ENCODE measurements at regions of chr6 and their contacts with region 1.

Region 1: DNA sequence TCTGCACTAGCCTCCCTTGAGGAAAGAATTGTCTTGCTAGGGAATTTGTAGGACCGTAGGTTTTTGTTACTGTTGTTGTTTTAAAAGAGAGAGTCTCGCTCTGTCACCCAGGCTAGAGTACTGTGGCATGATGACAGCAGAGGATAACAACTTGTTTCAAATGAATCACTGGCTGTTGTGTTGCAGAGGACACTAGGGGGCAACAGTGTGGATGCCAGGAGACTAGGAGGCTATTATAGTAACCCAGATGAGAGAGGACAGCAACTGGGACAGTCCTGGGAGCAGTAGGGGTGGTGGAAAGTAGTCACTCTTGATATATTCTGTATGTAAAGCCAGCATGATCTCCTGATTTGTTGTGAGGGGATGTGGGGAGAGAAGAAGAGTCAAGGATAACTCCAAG is 41.8 kb upstream of the LAMA4 start:
- DNase-seq: peak; percentile 11
- H3K27ac ChIP-seq: no peak overlapping the region
- CTCF ChIP-seq: no peak

Region 2: DNA sequence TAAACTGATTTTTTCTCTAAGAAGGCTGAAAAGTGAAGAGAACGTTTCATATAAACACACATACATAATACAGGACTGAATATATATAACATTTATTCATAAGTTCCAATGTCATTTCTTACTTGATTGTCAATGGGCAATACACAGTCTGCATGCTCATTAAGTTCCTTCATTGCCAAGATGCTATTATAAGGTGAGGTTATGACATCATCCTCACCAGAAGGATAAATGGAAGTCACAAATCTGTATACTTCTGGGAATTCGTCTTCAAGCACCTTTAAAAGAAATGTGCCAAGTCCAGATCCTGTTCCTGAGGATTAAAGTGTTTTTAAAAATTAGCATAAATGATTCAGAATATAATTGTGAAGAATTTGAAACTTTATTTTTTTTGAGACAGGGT is 219.9 kb before region 1 on chr6:
- CTCF ChIA-PET with region 1: no interaction called
- POLR2A ChIA-PET with region 1: no interaction called
- DNase-seq: no peak
- H3K27ac ChIP-seq: no peak overlapping the region
- CTCF ChIP-seq: no peak

Region 3: DNA sequence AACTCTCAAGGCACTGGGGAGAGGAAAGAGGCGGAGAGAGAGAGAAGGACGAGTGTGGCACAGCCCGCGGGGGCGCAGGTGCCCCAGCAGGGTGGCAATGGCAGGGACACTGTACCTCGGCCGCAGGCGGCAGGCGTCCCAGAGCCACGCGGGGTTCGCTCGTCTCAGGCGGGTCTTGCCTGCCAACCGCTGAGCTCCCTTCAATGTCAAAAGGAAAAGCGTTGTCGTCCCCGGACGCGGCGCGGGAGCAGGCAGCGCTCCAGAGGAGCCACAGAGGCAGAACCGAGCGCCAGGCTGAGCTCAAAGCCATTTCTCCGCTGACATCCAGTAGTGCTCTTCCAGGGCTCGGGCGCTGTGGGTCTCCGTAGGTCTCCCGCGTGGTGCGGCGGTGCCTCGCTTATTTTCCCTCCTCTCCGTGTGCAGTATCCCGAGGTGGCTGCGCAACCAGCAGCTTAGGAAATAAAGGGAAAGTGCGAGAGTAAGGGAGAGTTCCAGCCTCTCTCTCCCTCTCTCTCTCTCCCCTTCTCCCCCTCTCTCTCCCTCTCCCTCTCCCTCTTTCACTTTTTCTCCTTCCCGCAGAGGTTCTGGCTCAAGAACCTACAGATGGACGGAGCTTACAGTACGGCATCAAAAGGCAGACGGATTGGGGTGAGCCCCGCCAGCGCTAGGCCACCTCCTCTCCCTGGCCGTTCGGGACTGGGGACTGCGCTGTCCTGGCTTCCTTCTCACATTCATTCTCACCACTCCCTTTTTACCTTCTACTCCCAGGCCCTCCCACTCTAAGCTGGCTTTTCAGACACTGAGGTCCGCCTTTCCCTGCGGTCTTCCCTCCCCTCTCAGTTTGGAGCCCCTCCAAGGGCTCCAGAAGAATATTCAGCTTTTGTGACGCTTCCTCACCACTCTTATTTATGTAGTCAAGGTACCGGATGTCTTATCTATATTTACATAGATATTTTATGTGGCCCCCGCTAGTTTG is 42.0 kb before region 1 on chr6 and contains the start of gene LAMA4:
- CTCF ChIA-PET with region 1: interaction called, 11 read pairs
- POLR2A ChIA-PET with region 1: no interaction called
- DNase-seq: peak; percentile 38
- H3K27ac ChIP-seq: peak within 1 kb of the TSS; percentile 76
- CTCF ChIP-seq: no peak

Measured in RWPE1 (cell line).